ENCODE measurements at regions of chr12 and their contacts with region 1.

Region 1: GRCh38 chr12:112401903-112402498 is 7.4 kb downstream of the RPL6 start:
- DNase-seq: no peak
- H3K4me3 ChIP-seq: no peak overlapping the region
- H3K27ac ChIP-seq: no peak overlapping the region
- H3K4me1 ChIP-seq: no peaks in the 10 kb centered on the region
- H3K27me3 ChIP-seq: no peaks in the 10 kb centered on the region
- CTCF ChIP-seq: no peak
- EP300 ChIP-seq: no peak
- POLR2A ChIP-seq: no peak; a peak in 1 of 3 replicates
- RAD21 ChIP-seq: no peak

Region 2: GRCh38 chr12:112294793-112295192 is 107.2 kb before region 1 on chr12:
- CTCF ChIA-PET with region 1: no interaction called
- POLR2A ChIA-PET with region 1: no interaction called
- DNase-seq: no peak
- H3K4me3 ChIP-seq: no peak overlapping the region
- H3K27ac ChIP-seq: no peak overlapping the region
- H3K4me1 ChIP-seq: no peaks in the 10 kb centered on the region
- H3K27me3 ChIP-seq: no peaks in the 10 kb centered on the region
- CTCF ChIP-seq: no peak
- EP300 ChIP-seq: no peak
- POLR2A ChIP-seq: no peak
- RAD21 ChIP-seq: peak in 1 of 2 experiments; percentile 19; a peak in 1 of 4 replicates

Region 3: GRCh38 chr12:112362310-112362709 is 39.7 kb before region 1 on chr12:
- CTCF ChIA-PET with region 1: no interaction called
- POLR2A ChIA-PET with region 1: no interaction called
- DNase-seq: no peak
- H3K4me3 ChIP-seq: no peak overlapping the region
- H3K27ac ChIP-seq: no peak overlapping the region
- H3K4me1 ChIP-seq: no peaks in the 10 kb centered on the region; a peak in 1 of 7 replicates
- H3K27me3 ChIP-seq: no peaks in the 10 kb centered on the region
- CTCF ChIP-seq: no peak
- EP300 ChIP-seq: no peak
- POLR2A ChIP-seq: no peak
- RAD21 ChIP-seq: no peak

Region 4: DNA sequence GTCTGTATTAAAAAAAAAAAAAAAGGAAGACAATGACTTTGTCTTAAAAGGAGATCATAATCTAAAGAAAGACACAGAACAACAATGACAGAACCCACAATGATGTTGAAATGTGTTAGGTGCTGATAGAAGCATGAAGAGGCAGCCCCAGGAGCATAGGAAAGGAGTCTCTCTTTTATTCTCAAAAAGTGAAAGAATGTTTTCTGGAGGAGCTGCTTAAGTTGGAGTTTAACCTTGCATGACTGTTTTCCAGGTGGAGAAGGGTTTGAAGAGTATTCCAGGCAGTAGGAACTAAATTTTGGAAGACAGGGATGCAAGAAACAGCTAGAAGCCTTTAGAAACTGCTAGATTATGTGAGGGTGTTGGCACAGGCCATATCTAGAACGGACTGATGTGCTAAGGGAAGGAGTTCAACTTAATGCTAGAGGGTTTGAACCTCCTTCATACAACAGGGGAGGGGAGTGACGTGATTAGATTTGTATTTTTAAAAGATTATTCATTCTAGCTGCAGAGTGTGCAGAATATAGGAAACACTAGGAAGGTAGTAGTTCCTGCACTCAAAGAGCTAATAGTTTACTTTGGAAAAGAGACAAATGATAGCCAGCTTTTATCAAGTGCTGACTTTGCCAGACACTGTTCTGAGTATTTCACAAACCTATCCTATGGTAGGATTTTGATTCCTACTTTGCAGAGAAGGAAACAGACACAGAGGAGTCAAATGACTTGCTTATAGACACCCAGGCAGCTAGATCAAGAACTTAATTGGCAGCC is 12.0 kb after region 1 on chr12:
- CTCF ChIA-PET with region 1: interaction called, 9 read pairs
- POLR2A ChIA-PET with region 1: interaction called, 18 read pairs
- DNase-seq: no peak
- H3K4me3 ChIP-seq: no peak overlapping the region
- H3K27ac ChIP-seq: no peak overlapping the region
- H3K4me1 ChIP-seq: no peaks in the 10 kb centered on the region
- H3K27me3 ChIP-seq: no peaks in the 10 kb centered on the region
- CTCF ChIP-seq: no peak
- EP300 ChIP-seq: no peak
- POLR2A ChIP-seq: no peak
- RAD21 ChIP-seq: no peak

Region 5: DNA sequence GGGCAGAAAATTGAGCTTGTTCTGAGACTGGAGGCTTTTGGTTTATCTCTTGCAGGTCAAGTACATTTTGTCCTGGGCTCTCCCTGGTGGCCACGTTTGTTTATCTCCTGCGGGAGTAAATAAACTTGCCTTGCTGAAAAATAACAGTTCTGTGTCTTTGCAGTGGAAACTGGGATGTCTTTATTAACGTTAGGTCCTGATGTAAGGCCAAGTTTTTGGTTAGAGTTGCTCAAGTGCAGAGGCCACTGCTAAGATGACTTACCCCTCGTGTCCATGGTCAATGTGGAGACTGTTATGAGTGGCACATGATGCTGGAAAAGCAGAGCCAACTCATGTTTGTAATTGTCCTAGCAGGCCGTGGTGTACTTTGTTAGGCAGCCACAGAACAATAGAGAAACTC is 20.5 kb after region 1 on chr12:
- CTCF ChIA-PET with region 1: no interaction called
- POLR2A ChIA-PET with region 1: interaction called, 13 read pairs
- DNase-seq: no peak
- H3K4me3 ChIP-seq: no peak overlapping the region
- H3K27ac ChIP-seq: no peak overlapping the region
- H3K4me1 ChIP-seq: no peaks in the 10 kb centered on the region
- H3K27me3 ChIP-seq: no peaks in the 10 kb centered on the region
- CTCF ChIP-seq: no peak
- EP300 ChIP-seq: no peak
- POLR2A ChIP-seq: no peak
- RAD21 ChIP-seq: no peak

Measured in H1 (cell line).